Activated CD4-positive, alpha-beta memory T cell treated with anti-CD3 and anti-CD28 coated beads for 36 hours (primary cell): ENCODE measurements at regions of chr1 and their contacts with region 1.

Region 1: DNA sequence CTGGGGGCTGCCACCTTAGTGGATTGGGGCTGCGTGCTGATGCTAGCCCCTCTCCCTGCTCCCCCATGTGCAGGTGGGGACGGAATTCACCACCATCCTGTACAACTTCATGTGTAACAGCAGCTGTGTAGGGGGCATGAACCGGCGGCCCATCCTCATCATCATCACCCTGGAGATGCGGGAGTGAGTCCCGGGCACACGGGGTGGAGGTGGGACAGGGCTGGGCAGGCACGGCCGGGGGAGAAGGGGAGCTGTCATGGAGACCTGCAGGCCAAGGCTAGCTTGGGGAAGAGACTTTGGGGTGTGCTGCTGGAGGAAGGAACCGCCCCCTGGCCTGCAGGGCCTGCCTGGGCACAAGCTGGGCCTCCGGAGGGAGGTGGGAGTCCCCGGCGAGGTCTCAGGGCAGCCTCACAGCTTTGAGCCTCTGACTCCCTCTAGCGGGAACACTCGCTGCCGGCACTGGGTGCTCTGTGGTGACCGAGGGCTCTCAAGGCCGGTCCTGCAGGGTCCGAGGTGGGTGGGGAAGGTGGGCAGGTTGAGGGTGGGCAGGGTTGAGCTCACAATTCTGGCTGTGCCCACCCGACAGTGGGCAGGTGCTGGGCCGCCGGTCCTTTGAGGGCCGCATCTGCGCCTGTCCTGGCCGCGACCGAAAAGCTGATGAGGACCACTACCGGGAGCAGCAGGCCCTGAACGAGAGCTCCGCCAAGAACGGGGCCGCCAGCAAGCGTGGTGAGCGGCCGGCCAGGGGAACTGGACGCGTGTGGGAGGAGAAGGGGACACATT is 25.0 kb upstream of the CCDC27 start:
- DNase-seq: peak; percentile 25
- H3K4me3 Mint-ChIP-seq: no peak overlapping the region
- H3K27ac Mint-ChIP-seq: no peak overlapping the region
- H3K4me1 Mint-ChIP-seq: no peaks in the 10 kb centered on the region
- H3K27me3 Mint-ChIP-seq: peaks cover 4% of the 10 kb centered on the region

Region 2: GRCh38 chr1:3453203-3453761 is 274.0 kb before region 1 on chr1:
- CTCF ChIA-PET with region 1: interaction called, 14 read pairs
- POLR2A ChIA-PET with region 1: no interaction called
- intact Hi-C with region 1: loop called (anchors 10 kb)
- DNase-seq: peak; percentile 81
- H3K4me3 Mint-ChIP-seq: no peak overlapping the region
- H3K27ac Mint-ChIP-seq: no peak overlapping the region
- H3K4me1 Mint-ChIP-seq: peaks cover 2% of the 10 kb centered on the region
- H3K27me3 Mint-ChIP-seq: peaks cover 13% of the 10 kb centered on the region

Region 3: DNA sequence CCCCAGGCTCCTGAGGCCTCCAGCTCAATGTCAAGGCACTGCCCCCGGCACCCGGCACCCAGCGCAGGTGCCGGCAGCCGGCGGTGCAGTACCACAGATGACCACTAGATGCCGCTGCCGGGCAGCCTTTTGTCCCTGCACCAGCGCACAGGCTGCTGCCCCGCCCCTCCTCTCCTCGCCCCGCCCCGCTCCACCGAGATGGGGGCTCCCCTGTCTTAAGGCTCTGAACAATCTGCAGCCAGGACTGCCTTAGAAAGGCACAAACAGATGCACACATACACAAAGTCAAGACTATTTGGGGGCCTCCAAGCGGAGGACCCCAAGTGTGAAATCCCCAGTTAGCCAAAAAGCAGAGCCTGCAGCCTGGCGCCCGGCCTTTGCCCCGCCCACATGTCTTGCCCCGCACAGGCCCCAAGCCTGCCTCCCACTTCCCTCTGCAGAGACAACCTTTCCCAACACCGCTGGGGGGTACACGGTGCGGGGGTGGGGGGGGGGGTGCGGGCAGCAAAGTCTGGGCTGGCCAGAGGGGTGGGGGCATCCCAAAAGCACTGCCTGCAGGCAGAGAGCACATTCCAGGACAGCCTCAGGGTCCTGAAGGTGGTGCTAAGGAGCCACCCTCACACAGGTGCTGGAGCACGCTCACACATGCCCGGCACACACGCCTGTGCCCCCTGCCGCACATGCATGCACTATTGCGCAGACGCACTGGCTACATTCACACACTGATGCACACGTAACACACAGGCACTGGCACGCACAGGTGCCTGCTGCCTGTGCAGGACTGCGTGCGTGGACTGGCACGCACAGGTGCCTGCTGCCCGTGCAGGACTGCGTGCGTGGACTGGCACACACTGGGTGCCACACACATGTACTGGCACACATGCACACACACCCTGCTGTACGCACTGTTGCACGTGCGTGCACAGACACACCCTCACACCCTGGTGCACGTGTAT is 235.7 kb before region 1 on chr1:
- CTCF ChIA-PET with region 1: interaction called, 4 read pairs
- POLR2A ChIA-PET with region 1: no interaction called
- intact Hi-C with region 1: loop called (anchors 1 kb)
- DNase-seq: peak; percentile 88
- H3K4me3 Mint-ChIP-seq: no peak overlapping the region
- H3K27ac Mint-ChIP-seq: no peak overlapping the region
- H3K4me1 Mint-ChIP-seq: peaks cover 5% of the 10 kb centered on the region
- H3K27me3 Mint-ChIP-seq: no peaks in the 10 kb centered on the region

Region 4: DNA sequence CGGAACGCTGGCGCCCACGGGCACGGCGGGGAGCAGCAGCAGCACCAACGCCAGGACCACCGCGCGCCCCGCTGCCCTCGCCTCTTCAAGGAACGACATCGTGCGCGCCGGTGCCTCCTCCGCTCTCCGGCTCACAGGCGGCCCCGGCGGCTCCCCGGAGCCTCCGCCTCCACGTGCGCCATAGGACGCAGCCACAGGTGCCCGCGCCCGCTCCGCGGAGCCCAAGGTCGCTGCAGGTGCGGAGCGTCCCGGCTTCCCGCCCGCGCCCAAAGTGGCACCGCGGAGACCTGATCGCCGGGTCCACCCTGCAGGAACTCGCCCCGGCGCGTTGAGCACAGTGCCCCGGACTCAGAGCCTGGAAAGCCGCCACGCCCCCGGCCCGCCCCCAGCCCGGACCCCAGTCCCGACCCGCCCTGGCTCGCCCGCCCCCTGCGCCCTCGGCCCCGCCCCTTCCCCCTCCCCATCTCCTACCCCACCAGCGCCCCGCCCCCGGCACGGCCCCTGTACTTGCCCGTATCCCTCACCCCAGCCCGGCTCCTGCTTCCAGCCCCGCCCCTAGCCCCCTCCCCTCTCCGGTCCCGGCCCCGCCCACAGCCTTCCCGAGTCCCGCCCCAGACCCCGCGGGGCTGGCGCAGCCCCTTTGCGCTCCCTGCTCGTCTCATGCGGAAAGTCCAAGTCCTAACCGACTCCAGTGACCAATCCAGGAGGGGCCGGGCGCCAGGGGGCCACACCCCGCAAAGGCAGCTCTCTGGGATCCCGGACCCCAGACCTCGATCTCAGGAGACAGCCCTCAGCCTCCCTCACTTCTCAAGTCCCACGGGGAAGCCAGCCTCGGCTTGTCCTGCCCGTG is 115.8 kb before region 1 on chr1 and contains the start of gene MEGF6:
- CTCF ChIA-PET with region 1: no interaction called
- POLR2A ChIA-PET with region 1: no interaction called
- intact Hi-C with region 1: no loop called
- DNase-seq: peak; percentile 63
- H3K4me3 Mint-ChIP-seq: peak within 1 kb of the TSS; percentile 52
- H3K27ac Mint-ChIP-seq: no peak within 1 kb of the TSS
- H3K4me1 Mint-ChIP-seq: peaks cover 7% of the 10 kb centered on the region
- H3K27me3 Mint-ChIP-seq: peaks cover 16% of the 10 kb centered on the region
- total RNA-seq, gene MEGF6: 6.8 to 9.8 TPM

Region 5: GRCh38 chr1:3624200-3625136 is 102.8 kb before region 1 on chr1 and contains the start of gene TPRG1L:
- CTCF ChIA-PET with region 1: interaction called, 18 read pairs
- POLR2A ChIA-PET with region 1: no interaction called
- intact Hi-C with region 1: loop called (anchors 10 kb)
- DNase-seq: peak; percentile 98
- H3K4me3 Mint-ChIP-seq: peak within 1 kb of the TSS; percentile 86
- H3K27ac Mint-ChIP-seq: peak within 1 kb of the TSS; percentile 61
- H3K4me1 Mint-ChIP-seq: peaks cover 34% of the 10 kb centered on the region
- H3K27me3 Mint-ChIP-seq: no peaks in the 10 kb centered on the region
- total RNA-seq, gene TPRG1L: 9.2 to 10.4 TPM